Heart right ventricle (tissue), 16 donors: ENCODE measurements at regions of chr5 and their contacts with region 1.

Region 1: GRCh38 chr5:131109540-131110255 is 55.4 kb downstream of the HINT1 start:
- DNase-seq: peak in 1 of 2 donors; percentile 6
- ATAC-seq: peak in 2 of 8 donors; percentile 57 to 61
- H3K4me3 ChIP-seq: no peak overlapping the region
- H3K27ac ChIP-seq: no peak overlapping the region
- H3K4me1 ChIP-seq: peaks cover 0 to 10% (median 0%) of the 10 kb centered on the region in 9 donors
- H3K27me3 ChIP-seq: peaks cover 0 to 7% (median 0%) of the 10 kb centered on the region in 7 donors
- CTCF ChIP-seq: peak; percentile 42 to 86 (median 71)

Region 2: DNA sequence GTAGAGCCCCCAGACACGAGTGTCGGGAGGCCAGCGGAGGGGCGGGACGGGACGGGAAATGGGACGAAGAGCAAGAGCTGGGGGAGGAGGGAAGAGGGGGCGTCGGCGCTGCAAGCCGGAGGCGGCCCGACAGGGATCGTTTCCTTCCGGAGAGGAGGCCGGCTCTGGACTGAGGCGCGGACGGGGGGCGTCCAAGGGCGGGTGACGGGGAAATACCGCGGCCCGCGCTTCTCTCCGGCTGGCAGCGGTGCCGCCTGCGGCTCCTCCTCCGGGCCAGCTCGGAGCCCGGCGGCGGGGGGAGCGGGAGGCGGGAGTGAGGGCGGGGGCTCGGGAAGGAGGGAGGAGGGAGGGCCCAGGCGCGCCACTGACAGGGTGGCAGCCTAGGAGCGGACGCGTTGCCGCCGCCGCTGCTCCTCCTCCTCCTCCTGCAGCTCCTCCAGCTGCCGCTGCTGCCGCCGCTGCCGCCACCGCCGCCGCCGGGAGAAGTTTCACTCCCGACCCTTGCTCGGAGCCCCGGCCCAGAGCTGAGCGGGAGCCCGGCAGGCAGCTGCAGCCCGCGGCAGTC is 1205.5 kb before region 1 on chr5 and contains the start of gene CHSY3:
- intact Hi-C with region 1: loop called in 8 of 10 experiments (anchors 2 to 10 kb)
- DNase-seq: peak; percentile 76 to 86
- ATAC-seq: peak; percentile 91 to 98 (median 92)
- H3K4me3 ChIP-seq: peak within 1 kb of the TSS; percentile 51 to 89 (median 74)
- H3K27ac ChIP-seq: peak within 1 kb of the TSS; percentile 41 to 84 (median 73)
- H3K4me1 ChIP-seq: peaks cover 0 to 27% (median 19%) of the 10 kb centered on the region in 9 donors
- H3K27me3 ChIP-seq: peaks cover 0 to 63% (median 0%) of the 10 kb centered on the region in 7 donors
- CTCF ChIP-seq: peak in 3 of 9 donors; percentile 22 to 41 (median 29)
- total RNA-seq, gene CHSY3: 0.47 to 1.6 (median 1.1) TPM

Region 3: GRCh38 chr5:130109152-130109551 is 1000.5 kb before region 1 on chr5:
- intact Hi-C with region 1: loop called in 1 of 10 experiments (anchors 10 kb)
- DNase-seq: no peak
- ATAC-seq: no peak
- H3K4me3 ChIP-seq: no peak overlapping the region
- H3K27ac ChIP-seq: no peak overlapping the region
- H3K4me1 ChIP-seq: no peaks in the 10 kb centered on the region
- H3K27me3 ChIP-seq: no peaks in the 10 kb centered on the region
- CTCF ChIP-seq: peak in 7 of 9 donors; percentile 34 to 65 (median 54)

Region 4: DNA sequence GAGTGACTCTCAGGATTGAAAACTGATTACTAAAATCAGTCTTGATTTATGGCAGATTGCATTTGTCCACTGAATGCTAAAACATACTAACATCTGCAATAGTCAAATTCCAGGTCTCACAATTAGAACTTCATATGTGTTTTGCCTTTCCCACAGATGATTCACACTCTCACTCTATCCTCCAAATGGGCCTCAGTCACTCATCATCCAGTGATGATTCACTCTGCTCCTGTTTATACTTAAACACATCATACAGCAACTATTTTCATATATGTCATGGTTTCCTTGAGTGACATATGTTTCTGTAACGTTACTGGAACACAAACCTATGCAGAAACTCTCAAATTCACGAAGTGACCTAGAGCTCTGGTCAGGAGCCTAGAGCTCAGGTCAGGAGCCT is 457.5 kb before region 1 on chr5:
- intact Hi-C with region 1: no loop called
- DNase-seq: no peak
- ATAC-seq: no peak
- H3K4me3 ChIP-seq: no peak overlapping the region
- H3K27ac ChIP-seq: no peak overlapping the region
- H3K4me1 ChIP-seq: no peaks in the 10 kb centered on the region
- H3K27me3 ChIP-seq: no peaks in the 10 kb centered on the region
- CTCF ChIP-seq: no peak

Region 5: GRCh38 chr5:130871346-130872086 is 238.2 kb before region 1 on chr5:
- intact Hi-C with region 1: loop called in 1 of 10 experiments (anchors 10 kb)
- DNase-seq: peak; percentile 12 to 14
- ATAC-seq: peak in 7 of 8 donors; percentile 45 to 92 (median 65)
- H3K4me3 ChIP-seq: no peak overlapping the region
- H3K27ac ChIP-seq: no peak overlapping the region
- H3K4me1 ChIP-seq: peaks cover 0 to 15% (median 0%) of the 10 kb centered on the region in 9 donors
- H3K27me3 ChIP-seq: no peaks in the 10 kb centered on the region
- CTCF ChIP-seq: peak in 8 of 9 donors; percentile 34 to 63 (median 47)

Region 6: GRCh38 chr5:131270809-131271208 is 161.1 kb after region 1 on chr5:
- intact Hi-C with region 1: no loop called
- DNase-seq: no peak
- ATAC-seq: no peak
- H3K4me3 ChIP-seq: no peak overlapping the region
- H3K27ac ChIP-seq: peak overlapping the region in 1 of 10 donors; percentile 56
- H3K4me1 ChIP-seq: peaks cover 0 to 90% (median 13%) of the 10 kb centered on the region in 9 donors
- H3K27me3 ChIP-seq: no peaks in the 10 kb centered on the region
- CTCF ChIP-seq: no peak

Region 7: DNA sequence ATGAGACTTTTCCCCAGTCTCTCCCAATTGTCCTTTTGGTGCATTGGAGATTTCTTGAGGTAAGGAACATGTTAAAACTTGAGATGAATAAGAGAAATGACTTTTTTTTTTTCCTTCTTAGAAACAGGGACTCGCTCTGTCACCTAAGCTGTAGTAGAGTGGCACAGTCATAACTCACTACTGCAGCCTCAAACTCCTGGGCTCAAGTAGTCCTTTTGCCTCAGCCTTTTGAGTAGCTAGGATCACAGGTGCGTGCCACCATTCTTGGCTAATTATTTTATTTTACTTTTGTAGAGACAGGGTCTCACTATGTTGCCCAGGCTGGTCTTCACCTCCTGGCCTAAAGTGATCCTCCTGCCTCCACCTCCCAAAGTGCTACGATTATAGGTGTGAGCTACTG is 180.0 kb after region 1 on chr5:
- intact Hi-C with region 1: no loop called
- DNase-seq: no peak
- ATAC-seq: no peak
- H3K4me3 ChIP-seq: no peak overlapping the region
- H3K27ac ChIP-seq: peak overlapping the region in 1 of 10 donors; percentile 42
- H3K4me1 ChIP-seq: peaks cover 0 to 38% (median 0%) of the 10 kb centered on the region in 9 donors
- H3K27me3 ChIP-seq: no peaks in the 10 kb centered on the region
- CTCF ChIP-seq: no peak